PC-9 (cell line): ENCODE measurements at regions of chr18 and their contacts with region 1.

Region 1: GRCh38 chr18:48605408-48605845 is 66.6 kb downstream of the CTIF start:
- DNase-seq: peak in 1 of 2 experiments; percentile 5
- H3K4me3 ChIP-seq: no peak overlapping the region
- H3K27ac ChIP-seq: no peak overlapping the region
- H3K4me1 ChIP-seq: no peaks in the 10 kb centered on the region
- H3K27me3 ChIP-seq: no peaks in the 10 kb centered on the region
- CTCF ChIP-seq: peak; percentile 43; the same call in 1 of the 2 replicates

Region 2: DNA sequence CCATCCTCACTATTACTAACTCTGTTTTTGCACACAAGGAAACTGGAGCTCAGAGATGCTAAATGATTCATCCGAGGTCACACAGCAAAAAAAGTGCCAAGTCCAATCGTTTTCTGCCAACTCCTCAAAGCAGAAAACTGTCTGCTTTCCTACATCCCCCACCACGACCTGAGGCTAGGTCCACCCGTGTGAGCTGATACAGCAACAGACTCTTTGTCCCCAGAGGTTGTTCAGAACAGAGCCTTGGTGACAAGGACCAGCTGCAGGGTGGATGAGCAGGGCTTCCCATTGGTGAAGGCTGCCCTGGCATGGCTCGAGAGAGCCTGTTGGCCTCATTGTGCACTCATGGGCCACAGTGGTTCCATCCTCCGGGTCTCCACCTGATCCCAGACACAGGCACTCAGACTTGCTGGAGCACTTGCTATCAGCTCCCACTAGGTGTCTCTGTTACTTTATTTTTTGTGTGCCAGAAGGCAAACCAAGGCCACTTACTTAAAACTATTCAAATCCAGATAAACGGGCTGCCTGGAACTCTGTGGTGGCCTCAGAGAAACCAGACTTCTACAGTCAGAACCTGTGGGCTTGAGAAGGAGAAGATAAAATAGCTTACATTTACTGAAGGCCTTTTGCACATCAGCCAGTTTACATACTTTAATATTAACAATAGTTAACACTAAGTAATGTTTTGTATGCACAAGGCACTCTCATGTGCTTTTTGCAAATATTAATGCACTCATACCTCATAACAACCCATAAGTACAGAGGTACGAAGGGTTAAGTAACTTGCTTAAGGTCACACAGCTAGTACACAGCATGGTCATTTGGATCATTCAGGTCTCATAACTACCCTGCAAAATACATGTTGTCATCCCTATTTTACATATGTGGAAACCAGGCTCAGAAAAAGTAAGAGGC is 129.5 kb before region 1 on chr18:
- CTCF ChIA-PET with region 1: no interaction called
- POLR2A ChIA-PET with region 1: no interaction called
- intact Hi-C with region 1: loop called (anchors 1 kb)
- DNase-seq: peak; percentile 50 to 70
- H3K4me3 ChIP-seq: no peak overlapping the region
- H3K27ac ChIP-seq: no peak overlapping the region
- H3K4me1 ChIP-seq: no peaks in the 10 kb centered on the region
- H3K27me3 ChIP-seq: no peaks in the 10 kb centered on the region
- CTCF ChIP-seq: peak; percentile 90

Region 3: DNA sequence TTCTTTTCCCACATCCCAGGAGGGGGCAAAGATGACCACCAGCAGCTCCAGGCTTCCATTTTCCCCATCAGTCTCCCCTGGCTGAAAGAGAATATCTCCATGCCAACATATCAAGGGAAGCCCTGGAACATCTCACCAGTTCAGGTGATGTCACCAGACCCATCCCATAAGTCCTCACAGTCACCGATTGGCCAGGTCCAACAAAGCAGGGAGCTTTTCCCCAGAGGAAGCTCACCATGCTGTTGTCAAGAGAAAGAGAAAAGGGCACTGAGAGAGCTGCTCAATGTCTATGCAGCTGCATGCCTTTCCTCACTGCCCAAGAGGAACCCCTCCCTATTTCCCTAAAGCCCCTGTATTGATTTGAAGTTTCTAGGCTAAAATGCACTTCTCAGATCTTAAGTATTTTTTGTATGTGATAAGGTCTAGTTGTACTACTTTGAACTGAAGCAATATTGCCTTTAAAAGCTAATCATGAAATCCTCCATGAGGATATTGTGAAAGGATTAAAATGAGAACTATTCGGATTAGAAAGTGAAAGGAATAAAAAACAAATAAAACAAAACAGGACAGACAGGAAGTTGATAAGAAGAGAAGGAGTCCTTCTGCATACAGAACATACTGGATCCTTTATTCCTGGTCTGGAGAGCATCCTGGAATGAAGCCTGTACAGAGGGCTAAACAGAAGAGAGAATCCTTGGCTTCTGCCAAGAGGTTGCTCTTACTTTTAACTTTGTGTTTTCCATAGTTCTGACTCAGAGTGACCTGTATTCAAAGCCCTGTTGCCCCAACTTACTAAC is 111.8 kb before region 1 on chr18:
- CTCF ChIA-PET with region 1: interaction called, 3 read pairs
- POLR2A ChIA-PET with region 1: no interaction called
- intact Hi-C with region 1: loop called (anchors 5 kb)
- DNase-seq: peak in 1 of 2 experiments; percentile 63
- H3K4me3 ChIP-seq: no peak overlapping the region
- H3K27ac ChIP-seq: no peak overlapping the region
- H3K4me1 ChIP-seq: peaks cover 35% of the 10 kb centered on the region
- H3K27me3 ChIP-seq: no peaks in the 10 kb centered on the region
- CTCF ChIP-seq: no peak

Region 4: DNA sequence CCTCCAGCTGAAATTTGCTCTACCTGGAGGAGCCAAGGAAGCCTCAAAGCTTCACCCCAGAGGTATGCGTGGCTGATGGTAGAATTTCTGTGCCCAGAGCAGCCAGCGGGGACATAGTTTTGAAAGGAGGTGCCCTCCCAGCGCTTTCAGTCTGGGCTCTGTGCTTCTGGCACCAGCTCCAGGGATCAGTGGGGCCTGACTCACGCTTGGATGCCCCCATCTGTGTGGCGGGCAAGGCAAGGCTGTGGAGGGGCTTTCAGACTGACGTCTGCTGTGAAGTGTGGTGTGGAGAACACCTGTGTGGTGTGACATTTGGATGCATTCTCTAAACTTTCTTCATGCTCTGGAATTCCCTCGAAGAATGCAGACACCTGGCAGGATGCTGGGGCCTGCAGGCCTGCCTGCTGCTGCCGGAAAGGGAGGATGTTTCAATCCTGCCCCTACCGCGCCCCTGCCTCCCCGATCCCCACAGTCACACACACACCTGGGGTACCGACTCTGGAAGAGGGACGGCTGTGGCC is 17.5 kb after region 1 on chr18:
- CTCF ChIA-PET with region 1: no interaction called
- POLR2A ChIA-PET with region 1: no interaction called
- intact Hi-C with region 1: loop called (anchors 2 kb)
- DNase-seq: peak; percentile 54 to 79
- H3K4me3 ChIP-seq: no peak overlapping the region
- H3K27ac ChIP-seq: peak overlapping the region; percentile 61
- H3K4me1 ChIP-seq: peaks cover 35% of the 10 kb centered on the region
- H3K27me3 ChIP-seq: no peaks in the 10 kb centered on the region
- CTCF ChIP-seq: no peak